ENCODE measurements at regions of chr20 and their contacts with region 1.

Region 1: DNA sequence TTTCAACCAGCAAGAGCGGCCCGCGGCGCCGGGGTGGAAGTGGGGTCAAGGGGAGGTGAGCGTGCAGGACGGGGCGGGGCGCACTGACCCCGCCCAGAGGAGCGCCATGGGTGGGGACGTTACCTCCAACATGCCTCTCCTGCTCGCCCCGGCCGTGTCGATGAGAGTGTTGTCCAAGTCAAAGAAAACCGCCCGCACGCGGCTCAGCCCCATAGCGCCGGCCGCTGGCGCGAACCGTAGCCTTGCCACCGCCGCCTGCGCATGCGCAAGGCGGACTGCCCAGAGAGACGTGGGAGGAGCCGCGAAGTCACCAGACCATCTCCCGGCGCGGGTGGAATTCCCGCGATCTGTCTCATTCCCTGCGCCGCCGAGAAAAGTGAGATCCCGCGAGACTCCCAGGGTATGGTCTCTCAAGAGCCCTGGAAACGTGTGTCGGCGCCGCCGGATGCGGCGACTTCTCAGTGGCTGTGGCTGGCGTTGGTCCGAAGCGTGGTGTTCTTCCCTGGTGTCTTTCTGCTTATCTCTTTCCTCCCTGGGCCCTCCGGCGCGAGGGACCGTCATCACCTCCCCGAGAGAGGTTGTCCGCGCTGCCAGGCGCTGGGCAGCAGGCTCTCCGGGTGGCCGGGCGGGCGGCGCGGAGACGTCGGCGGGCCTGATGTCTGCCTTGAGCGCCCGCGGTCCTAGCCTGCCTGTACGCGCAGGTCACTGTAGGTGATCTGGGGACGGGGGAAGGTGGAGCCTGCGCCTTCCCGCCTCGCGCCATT is at the start of gene NANP:
- DNase-seq: peak; percentile 79 to 84 (median 83)
- H3K4me3 ChIP-seq: peak within 1 kb of the TSS; percentile 56 to 73
- H3K4me3 Mint-ChIP-seq: peak within 1 kb of the TSS; percentile 92 to 97 (median 96)
- H3K27ac ChIP-seq: peak within 1 kb of the TSS; percentile 50
- H3K27ac Mint-ChIP-seq: peak within 1 kb of the TSS; percentile 78 to 97 (median 95)
- H3K4me1 ChIP-seq: peaks cover 16% of the 10 kb centered on the region
- H3K4me1 Mint-ChIP-seq: peaks cover 14 to 25% (median 17%) of the 10 kb centered on the region in 4 donors
- H3K27me3 ChIP-seq: no peaks in the 10 kb centered on the region
- H3K27me3 Mint-ChIP-seq: no peaks in the 10 kb centered on the region
- total RNA-seq, gene NANP: 1.9 to 2.0 TPM

Region 2: DNA sequence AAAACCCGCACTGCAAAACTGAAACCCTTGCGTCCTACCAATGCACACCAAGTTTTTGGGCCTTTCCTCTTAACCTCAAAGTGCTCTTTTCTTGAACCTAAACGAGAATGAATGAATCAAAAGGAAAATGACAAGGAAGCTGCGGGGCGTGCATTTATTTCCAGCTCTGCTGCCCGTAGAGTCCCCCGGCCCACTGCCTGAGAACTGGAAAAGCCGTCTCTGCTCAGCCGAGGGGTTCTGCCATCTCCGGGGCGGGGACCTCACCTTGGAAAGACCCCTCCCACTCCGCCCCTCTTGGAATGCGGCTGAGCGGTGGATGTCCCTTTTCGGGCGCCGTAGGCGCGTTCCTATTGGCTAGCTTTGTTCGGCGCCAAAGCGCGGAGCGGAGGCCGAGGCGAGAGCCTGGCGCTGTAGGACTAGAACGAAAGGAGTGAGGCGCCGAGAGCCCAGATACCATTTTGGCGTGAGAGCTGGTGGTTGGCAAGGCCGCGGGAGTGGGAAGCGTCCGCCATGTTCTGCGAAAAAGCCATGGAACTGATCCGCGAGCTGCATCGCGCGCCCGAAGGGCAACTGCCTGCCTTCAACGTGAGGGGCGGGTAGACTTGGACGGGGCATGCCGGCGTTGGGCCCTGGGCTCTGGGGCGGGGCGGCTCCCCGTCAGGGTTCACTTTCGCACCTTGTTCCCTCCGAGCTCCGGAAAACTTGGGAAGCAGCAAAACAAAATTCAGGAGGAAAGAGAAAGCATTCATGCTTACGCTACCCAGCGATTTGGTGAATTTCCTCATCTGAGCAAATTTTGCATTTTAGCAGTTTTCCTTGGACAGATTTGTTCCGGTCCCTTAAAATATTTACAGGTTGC is 216.4 kb before region 1 on chr20 and contains the start of gene GINS1:
- CTCF ChIA-PET with region 1: no interaction called
- POLR2A ChIA-PET with region 1: no interaction called
- intact Hi-C with region 1: loop called (anchors 5 kb)
- DNase-seq: peak; percentile 62 to 76 (median 71)
- H3K4me3 ChIP-seq: peak within 1 kb of the TSS; percentile 46 to 81
- H3K4me3 Mint-ChIP-seq: peak within 1 kb of the TSS; percentile 90 to 97 (median 92)
- H3K27ac ChIP-seq: peak within 1 kb of the TSS; percentile 52
- H3K27ac Mint-ChIP-seq: peak within 1 kb of the TSS; percentile 70 to 89 (median 88)
- H3K4me1 ChIP-seq: peaks cover 11% of the 10 kb centered on the region
- H3K4me1 Mint-ChIP-seq: peaks cover 3 to 21% (median 10%) of the 10 kb centered on the region in 4 donors
- H3K27me3 ChIP-seq: no peaks in the 10 kb centered on the region
- H3K27me3 Mint-ChIP-seq: no peaks in the 10 kb centered on the region
- total RNA-seq, gene GINS1: 0.75 to 1.3 TPM

Region 3: GRCh38 chr20:25584905-25585704 is 38.8 kb before region 1 on chr20 and contains the start of gene NINL:
- CTCF ChIA-PET with region 1: no interaction called
- POLR2A ChIA-PET with region 1: no interaction called
- intact Hi-C with region 1: loop called (anchors 1 kb)
- DNase-seq: peak; percentile 26 to 50 (median 44)
- H3K4me3 ChIP-seq: peak within 1 kb of the TSS in 1 of 2 donors; percentile 47
- H3K4me3 Mint-ChIP-seq: peak within 1 kb of the TSS; percentile 59 to 85 (median 72)
- H3K27ac ChIP-seq: no peak within 1 kb of the TSS
- H3K27ac Mint-ChIP-seq: peak within 1 kb of the TSS in 5 of 7 donors; percentile 30 to 85 (median 51)
- H3K4me1 ChIP-seq: peaks cover 5% of the 10 kb centered on the region
- H3K4me1 Mint-ChIP-seq: peaks cover 3 to 11% (median 8%) of the 10 kb centered on the region in 4 donors
- H3K27me3 ChIP-seq: no peaks in the 10 kb centered on the region
- H3K27me3 Mint-ChIP-seq: peaks cover 0 to 3% of the 10 kb centered on the region in 2 donors
- total RNA-seq, gene NINL: 3.4 to 4.0 TPM

Region 4: GRCh38 chr20:25606094-25606695 is 17.7 kb before region 1 on chr20:
- CTCF ChIA-PET with region 1: no interaction called
- POLR2A ChIA-PET with region 1: no interaction called
- intact Hi-C with region 1: no loop called
- DNase-seq: no peak
- H3K4me3 ChIP-seq: no peak overlapping the region
- H3K4me3 Mint-ChIP-seq: no peak overlapping the region
- H3K27ac ChIP-seq: no peak overlapping the region
- H3K27ac Mint-ChIP-seq: no peak overlapping the region
- H3K4me1 ChIP-seq: no peaks in the 10 kb centered on the region
- H3K4me1 Mint-ChIP-seq: no peaks in the 10 kb centered on the region
- H3K27me3 ChIP-seq: no peaks in the 10 kb centered on the region
- H3K27me3 Mint-ChIP-seq: peaks cover 0 to under 1% of the 10 kb centered on the region in 2 donors

Measured in CD4-positive, alpha-beta memory T cell (primary cell).